Endothelial cell of umbilical vein (primary cell): ENCODE measurements at regions of chr9 and their contacts with region 1.

Region 1: GRCh38 chr9:36665921-36666431 is 93.3 kb downstream of the MELK start:
- DNase-seq: peak; percentile 92
- H3K4me3 ChIP-seq: peak overlapping the region in 1 of 3 experiments; percentile 25
- H3K27ac ChIP-seq: peak overlapping the region; percentile 93
- H3K4me1 ChIP-seq: peaks cover 35% of the 10 kb centered on the region
- H3K27me3 ChIP-seq: no peaks in the 10 kb centered on the region
- CTCF ChIP-seq: no peak
- POLR2A ChIP-seq: peak; percentile 72

Region 2: GRCh38 chr9:36625006-36625615 is 40.9 kb before region 1 on chr9:
- CTCF ChIA-PET with region 1: interaction called, 11 read pairs
- POLR2A ChIA-PET with region 1: no interaction called
- dilution Hi-C with region 1: no loop called
- intact Hi-C with region 1: no loop called
- DNase-seq: peak; percentile 67
- H3K4me3 ChIP-seq: no peak overlapping the region
- H3K27ac ChIP-seq: peak overlapping the region; percentile 54
- H3K4me1 ChIP-seq: peaks cover 12% of the 10 kb centered on the region
- H3K27me3 ChIP-seq: no peaks in the 10 kb centered on the region
- CTCF ChIP-seq: no peak
- POLR2A ChIP-seq: no peak